ENCODE measurements at regions of chr21 and their contacts with region 1.

Region 1: GRCh38 chr21:27700974-27701614 is 734.2 kb upstream of the ADAMTS5 start:
- DNase-seq: peak; percentile 81

Region 2: DNA sequence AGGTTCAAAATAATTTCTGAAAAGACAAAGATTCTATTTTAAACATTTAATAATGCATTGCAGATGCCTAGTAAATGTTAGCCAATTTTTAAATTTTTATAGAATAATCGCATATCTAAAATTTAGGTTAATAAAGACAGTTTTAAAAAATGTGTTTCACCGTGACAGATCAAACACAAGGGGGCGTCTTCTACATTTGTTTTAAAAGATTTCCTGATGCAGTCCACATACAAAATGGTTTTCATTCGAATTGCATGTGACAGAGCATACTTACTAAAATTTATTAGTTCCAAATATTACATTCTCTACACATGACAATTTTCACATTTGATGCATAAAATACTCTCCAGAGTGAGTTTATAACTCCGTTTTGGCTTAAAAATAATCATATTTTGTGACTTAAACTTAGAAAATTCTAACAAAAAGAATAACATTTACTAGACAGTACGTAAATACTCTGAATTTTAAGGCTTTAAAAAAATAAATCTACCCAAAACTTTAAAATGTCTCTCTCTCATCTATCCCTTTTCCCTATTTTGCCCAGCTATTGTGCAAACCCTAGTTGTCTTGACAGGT is 931.4 kb before region 1 on chr21:
- intact Hi-C with region 1: loop called (anchors 10 kb)
- DNase-seq: no peak

Region 3: GRCh38 chr21:26850108-26850643 is 850.9 kb before region 1 on chr21:
- intact Hi-C with region 1: loop called (anchors 2 kb)
- DNase-seq: no peak

Region 4: DNA sequence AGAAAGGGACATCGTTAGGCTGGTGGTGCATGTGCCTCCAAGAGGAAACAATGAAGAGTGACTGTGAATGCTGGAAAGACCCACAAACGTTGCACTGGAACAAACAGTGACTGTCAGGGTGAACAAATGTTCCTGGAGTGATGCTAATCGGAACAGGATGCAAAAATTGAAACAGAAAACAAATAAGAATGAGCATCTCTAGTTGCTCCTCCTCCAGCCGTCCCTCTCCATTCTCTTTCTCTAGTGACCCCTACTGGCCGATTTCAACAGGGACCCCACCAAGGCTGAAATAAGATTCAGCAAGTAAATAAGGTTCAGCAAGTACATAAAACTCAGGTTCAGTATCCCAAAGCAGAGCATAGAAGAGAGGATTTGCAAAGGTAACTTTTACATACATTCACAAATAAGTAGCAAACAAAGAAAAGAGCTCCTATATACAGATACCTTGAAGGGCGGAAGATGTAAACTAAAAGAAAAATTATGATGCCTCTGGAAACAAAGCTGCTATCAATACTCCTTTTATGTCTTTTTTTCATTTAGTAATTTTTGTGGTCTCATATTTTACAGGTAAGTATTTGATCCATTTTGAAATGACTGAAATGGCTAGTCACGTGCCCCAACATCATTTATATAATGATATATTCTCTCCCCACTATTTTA is 101.9 kb after region 1 on chr21:
- intact Hi-C with region 1: loop called (anchors 10 kb)
- DNase-seq: no peak

Region 5: DNA sequence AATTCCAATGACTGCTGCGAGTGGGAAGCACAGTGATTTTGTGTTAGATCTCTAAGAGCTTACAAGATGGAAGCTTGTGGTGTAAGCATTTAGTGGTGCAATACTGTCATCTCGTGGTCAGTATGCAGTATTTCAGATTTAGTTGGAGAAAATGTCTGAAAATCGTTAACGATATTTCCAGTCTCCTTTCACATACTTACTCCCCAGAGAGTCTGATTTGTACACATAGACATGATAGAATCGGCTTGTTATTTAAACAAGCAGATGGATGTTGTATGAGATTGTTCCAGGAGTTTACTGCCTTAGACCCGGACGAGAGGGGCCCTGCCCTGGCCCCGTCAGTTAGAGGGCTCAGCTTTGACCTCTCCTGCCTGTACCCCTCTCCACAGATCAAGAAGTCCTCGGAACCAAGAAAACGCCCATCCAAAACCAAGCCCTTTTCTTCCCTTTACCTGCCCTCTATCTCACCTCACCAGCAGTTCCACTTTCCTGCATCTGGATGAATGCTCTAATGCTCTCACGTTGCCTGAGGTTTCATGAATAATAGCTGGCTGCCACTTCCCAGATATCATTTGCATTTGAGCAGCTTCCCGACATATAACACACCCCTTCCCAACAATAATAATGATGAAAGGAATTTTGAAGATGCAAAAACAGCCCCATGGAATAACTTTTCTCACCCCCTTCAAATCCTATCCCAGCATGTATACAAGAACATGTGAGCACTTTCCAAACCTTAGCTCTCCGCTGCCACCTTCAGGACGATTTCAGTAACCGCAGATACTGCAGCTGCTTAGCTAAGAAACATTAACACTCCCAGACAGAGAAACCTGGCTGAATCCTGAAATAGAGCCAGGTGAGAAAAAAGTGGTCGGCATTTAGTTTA is 1044.3 kb after region 1 on chr21:
- intact Hi-C with region 1: loop called (anchors 5 kb)
- DNase-seq: peak; percentile 84

Region 6: GRCh38 chr21:28793043-28793442 is 1091.9 kb after region 1 on chr21:
- intact Hi-C with region 1: loop called (anchors 5 kb)
- DNase-seq: no peak

Measured in cardiac septum (tissue), 1 donor.